ENCODE measurements at regions of chr1 and their contacts with region 1.

Region 1: GRCh38 chr1:175154629-175155472 is 37.7 kb downstream of the KIAA0040 start:
- DNase-seq: peak; percentile 87
- H3K4me3 Mint-ChIP-seq: no peak overlapping the region
- H3K27ac Mint-ChIP-seq: no peak overlapping the region
- H3K4me1 Mint-ChIP-seq: peaks cover 24% of the 10 kb centered on the region
- H3K27me3 Mint-ChIP-seq: peaks cover 25% of the 10 kb centered on the region

Region 2: DNA sequence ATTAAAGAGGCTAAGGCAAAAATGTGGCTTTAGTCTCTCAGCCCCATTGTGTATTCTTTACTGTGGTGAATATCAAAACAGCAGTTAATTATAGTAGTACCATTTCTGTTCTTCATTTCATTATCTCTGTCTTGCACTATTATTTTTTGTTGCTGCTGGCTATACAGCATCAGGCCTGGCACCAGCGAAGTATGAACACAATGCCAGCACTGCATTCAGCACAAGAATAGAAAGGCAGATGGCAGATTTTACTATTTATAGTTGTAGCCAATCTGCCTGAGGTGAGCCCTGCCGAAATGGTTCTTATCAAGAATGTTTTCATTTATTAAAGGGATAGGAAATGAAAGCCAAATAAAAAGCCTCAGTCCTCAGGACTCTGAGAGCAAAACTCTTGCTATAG is 635.0 kb before region 1 on chr1:
- CTCF ChIA-PET with region 1: no interaction called
- intact Hi-C with region 1: no loop called
- DNase-seq: no peak
- H3K4me3 Mint-ChIP-seq: no peak overlapping the region
- H3K27ac Mint-ChIP-seq: no peak overlapping the region
- H3K4me1 Mint-ChIP-seq: no peaks in the 10 kb centered on the region
- H3K27me3 Mint-ChIP-seq: no peaks in the 10 kb centered on the region

Region 3: GRCh38 chr1:175023043-175023921 is 131.6 kb before region 1 on chr1 and contains the start of gene MRPS14:
- CTCF ChIA-PET with region 1: interaction called, 14 read pairs
- intact Hi-C with region 1: no loop called
- DNase-seq: peak; percentile 100
- H3K4me3 Mint-ChIP-seq: peak within 1 kb of the TSS; percentile 87
- H3K27ac Mint-ChIP-seq: peak within 1 kb of the TSS; percentile 86
- H3K4me1 Mint-ChIP-seq: peaks cover 31% of the 10 kb centered on the region
- H3K27me3 Mint-ChIP-seq: no peaks in the 10 kb centered on the region
- total RNA-seq, gene MRPS14: 48.8 to 51.2 TPM

Region 4: GRCh38 chr1:175169305-175170018 is 14.6 kb after region 1 on chr1:
- CTCF ChIA-PET with region 1: interaction called, 19 read pairs
- intact Hi-C with region 1: no loop called
- DNase-seq: no peak
- H3K4me3 Mint-ChIP-seq: no peak overlapping the region
- H3K27ac Mint-ChIP-seq: no peak overlapping the region
- H3K4me1 Mint-ChIP-seq: peaks cover 44% of the 10 kb centered on the region
- H3K27me3 Mint-ChIP-seq: no peaks in the 10 kb centered on the region

Region 5: DNA sequence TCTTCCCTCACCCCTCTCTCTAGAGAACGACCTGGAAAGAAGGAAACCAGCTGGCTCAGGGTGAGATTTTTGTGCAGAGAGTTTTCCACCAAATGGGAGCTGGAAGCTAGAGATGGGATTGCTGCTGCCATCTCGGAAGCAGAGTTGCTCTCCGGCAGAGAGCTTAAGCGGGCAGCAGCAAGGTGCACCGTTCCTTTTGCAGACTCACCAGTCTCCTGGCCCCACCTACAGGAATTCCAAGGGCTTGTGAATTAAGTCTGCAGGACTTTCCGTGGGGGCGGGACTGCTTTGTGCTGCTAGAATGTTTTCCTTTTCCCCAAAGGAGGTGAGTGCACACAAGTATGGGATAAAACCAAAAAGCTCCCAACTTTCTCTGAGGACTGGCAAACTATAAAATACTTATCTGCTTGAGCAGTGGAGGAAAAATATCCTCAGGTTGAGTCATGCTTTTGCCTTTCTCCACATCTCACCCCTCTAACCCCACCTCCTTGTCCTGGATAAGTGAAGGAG is 66.9 kb after region 1 on chr1:
- CTCF ChIA-PET with region 1: interaction called, 8 read pairs
- intact Hi-C with region 1: loop called (anchors 2 kb)
- DNase-seq: no peak
- H3K4me3 Mint-ChIP-seq: no peak overlapping the region
- H3K27ac Mint-ChIP-seq: no peak overlapping the region
- H3K4me1 Mint-ChIP-seq: peaks cover 9% of the 10 kb centered on the region
- H3K27me3 Mint-ChIP-seq: no peaks in the 10 kb centered on the region

Region 6: DNA sequence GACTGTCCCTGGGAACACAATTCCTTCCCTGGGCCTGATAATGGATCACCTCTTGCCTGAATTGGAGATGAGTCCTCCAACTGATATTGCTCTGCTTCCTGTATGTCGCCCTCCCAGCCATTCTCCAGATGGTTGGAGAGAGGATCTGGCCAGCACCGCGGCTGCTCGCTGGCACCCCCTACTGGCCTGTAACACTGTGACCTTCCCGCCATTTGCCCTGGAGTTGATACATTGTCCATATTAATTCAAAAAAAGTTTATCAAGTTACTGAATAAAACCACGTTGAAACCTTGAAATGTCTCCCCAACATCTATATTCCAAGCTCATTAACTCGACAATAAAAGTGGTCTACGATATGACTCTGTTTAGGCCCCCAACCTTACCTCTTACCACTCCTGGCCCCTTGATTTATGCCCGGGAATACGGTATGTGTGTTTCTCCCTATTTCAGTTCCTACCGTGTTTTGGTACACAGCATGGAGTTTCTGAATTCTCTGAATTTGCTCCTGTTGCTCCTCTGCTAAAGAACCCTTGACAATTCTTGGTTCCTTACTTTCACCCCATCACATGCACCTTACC is 279.5 kb after region 1 on chr1:
- CTCF ChIA-PET with region 1: interaction called, 7 read pairs
- intact Hi-C with region 1: loop called (anchors 2 kb)
- DNase-seq: peak; percentile 8
- H3K4me3 Mint-ChIP-seq: no peak overlapping the region
- H3K27ac Mint-ChIP-seq: no peak overlapping the region
- H3K4me1 Mint-ChIP-seq: no peaks in the 10 kb centered on the region
- H3K27me3 Mint-ChIP-seq: peaks cover 30% of the 10 kb centered on the region

Region 7: DNA sequence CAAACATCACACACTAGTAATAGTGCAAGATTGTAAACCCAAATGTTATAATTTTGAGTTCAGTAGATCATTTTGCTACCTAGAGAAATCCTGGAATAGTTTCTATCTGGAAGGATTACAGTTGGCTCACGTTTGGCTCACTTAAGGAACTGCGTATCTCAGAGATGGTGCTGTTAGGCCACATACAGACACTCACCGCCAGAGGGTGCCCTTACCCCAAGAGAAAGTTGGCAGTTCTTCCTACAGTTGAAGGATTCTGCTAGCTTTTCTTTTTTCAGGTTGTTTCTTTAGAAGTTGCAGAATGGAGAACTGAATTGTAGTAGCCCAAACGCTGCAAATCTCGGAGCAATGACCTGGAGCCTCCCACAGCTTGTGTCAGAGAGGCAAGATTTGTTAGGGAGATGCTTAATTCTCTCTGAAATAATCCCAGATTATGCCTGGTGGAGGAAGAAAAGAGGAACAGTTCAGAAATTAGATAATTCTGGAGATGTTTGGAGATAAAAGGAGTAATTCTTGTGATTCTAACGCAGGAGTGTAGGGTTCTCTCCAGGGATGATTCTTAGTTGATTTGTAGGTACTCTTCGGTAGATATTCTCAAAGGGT is 1220.2 kb after region 1 on chr1:
- CTCF ChIA-PET with region 1: no interaction called
- intact Hi-C with region 1: loop called (anchors 1 kb)
- DNase-seq: peak; percentile 87
- H3K4me3 Mint-ChIP-seq: no peak overlapping the region
- H3K27ac Mint-ChIP-seq: no peak overlapping the region
- H3K4me1 Mint-ChIP-seq: no peaks in the 10 kb centered on the region
- H3K27me3 Mint-ChIP-seq: peaks cover 10% of the 10 kb centered on the region